CD4-positive, alpha-beta T cell (primary cell): ENCODE measurements at regions of chr20 and their contacts with region 1.

Region 1: GRCh38 chr20:36998652-36999051 is 47.1 kb upstream of the SAMHD1 start:
- DNase-seq: peak in 5 of 14 experiments; percentile 7 to 67 (median 53)
- ATAC-seq: peak; percentile 93
- H3K4me3 ChIP-seq: no peak overlapping the region
- H3K4me3 Mint-ChIP-seq: peak overlapping the region; percentile 14
- H3K27ac ChIP-seq: peak overlapping the region; percentile 43 to 54
- H3K27ac Mint-ChIP-seq: peak overlapping the region; percentile 98
- H3K4me1 ChIP-seq: peaks cover 4% of the 10 kb centered on the region
- H3K4me1 Mint-ChIP-seq: peaks cover 21% of the 10 kb centered on the region
- H3K27me3 ChIP-seq: no peaks in the 10 kb centered on the region
- H3K27me3 Mint-ChIP-seq: no peaks in the 10 kb centered on the region
- CTCF ChIP-seq: no peak

Region 2: DNA sequence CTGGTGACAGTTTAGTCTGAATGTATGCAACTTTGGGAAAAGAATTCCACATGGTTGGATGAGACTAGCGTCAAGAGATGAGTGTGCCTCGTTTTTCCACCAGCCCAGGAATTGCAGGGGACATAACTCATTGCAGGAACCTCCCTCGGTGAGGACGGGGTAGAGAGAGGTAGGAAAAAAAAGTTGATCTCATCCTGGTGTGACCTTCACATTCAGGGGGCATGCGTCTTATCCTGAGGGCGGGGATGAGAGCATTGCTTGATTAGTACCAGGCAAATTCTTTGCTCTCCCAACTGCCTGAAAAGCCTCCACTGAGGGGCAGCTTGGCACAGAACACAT is 110.9 kb before region 1 on chr20:
- CTCF ChIA-PET with region 1: no interaction called
- POLR2A ChIA-PET with region 1: no interaction called
- intact Hi-C with region 1: no loop called
- DNase-seq: no peak
- ATAC-seq: no peak
- H3K4me3 ChIP-seq: no peak overlapping the region
- H3K4me3 Mint-ChIP-seq: no peak overlapping the region
- H3K27ac ChIP-seq: no peak overlapping the region
- H3K27ac Mint-ChIP-seq: peak overlapping the region; percentile 61
- H3K4me1 ChIP-seq: peaks cover 13% of the 10 kb centered on the region
- H3K4me1 Mint-ChIP-seq: peaks cover 16% of the 10 kb centered on the region
- H3K27me3 ChIP-seq: no peaks in the 10 kb centered on the region
- H3K27me3 Mint-ChIP-seq: no peaks in the 10 kb centered on the region
- CTCF ChIP-seq: no peak

Region 3: DNA sequence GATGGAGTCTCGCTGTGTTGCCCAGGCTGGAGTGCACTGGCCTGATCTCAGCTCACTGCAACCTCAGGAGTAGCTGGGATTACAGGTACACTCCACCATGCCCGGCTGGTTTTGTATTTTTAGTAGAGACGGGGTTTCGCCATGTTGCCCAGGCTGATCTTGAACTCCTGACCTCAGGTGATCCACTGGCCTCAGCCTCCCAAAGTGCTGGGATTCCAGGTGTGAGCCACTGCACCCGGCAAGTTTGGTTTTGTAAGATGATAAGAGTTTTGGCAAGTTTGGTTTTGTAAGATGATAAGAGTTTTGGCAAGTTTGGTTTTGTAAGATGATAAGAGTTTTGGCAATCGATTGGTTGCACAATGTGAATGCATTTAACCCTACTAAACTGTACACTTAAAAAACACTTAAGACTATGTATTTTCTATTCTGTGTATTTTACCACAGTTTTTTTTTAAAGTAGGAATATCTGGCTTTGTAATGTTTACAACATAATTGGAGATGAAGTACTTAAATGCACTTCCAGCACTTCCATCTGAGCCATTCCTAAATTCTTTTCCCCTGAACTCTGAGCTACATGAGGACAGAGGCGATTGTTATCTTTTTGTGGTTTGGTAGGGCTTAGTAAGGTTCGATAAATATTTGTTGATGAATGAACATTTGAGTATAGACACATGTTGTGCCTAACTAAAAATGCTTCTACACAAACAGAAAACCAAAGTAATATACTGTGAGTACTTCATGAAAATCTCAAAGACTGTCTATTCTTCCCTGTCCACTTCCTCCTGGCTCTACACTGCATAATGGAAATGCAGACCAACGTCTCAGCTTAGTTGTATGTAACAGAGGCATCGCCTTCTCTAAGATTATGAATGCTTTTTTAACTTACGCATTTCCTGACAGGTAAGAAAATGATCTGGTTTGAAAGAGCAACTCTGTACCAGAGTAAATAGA is 65.9 kb before region 1 on chr20:
- CTCF ChIA-PET with region 1: no interaction called
- POLR2A ChIA-PET with region 1: interaction called, 10 read pairs
- intact Hi-C with region 1: no loop called
- DNase-seq: peak in 1 of 14 experiments; percentile 16
- ATAC-seq: no peak
- H3K4me3 ChIP-seq: no peak overlapping the region
- H3K4me3 Mint-ChIP-seq: peak overlapping the region; percentile 37
- H3K27ac ChIP-seq: peak overlapping the region in 1 of 2 donors; percentile 21
- H3K27ac Mint-ChIP-seq: peak overlapping the region; percentile 81
- H3K4me1 ChIP-seq: peaks cover 68% of the 10 kb centered on the region
- H3K4me1 Mint-ChIP-seq: peaks cover 64% of the 10 kb centered on the region
- H3K27me3 ChIP-seq: no peaks in the 10 kb centered on the region
- H3K27me3 Mint-ChIP-seq: no peaks in the 10 kb centered on the region
- CTCF ChIP-seq: no peak

Region 4: GRCh38 chr20:37032077-37032476 is 33.4 kb after region 1 on chr20:
- CTCF ChIA-PET with region 1: no interaction called
- POLR2A ChIA-PET with region 1: no interaction called
- intact Hi-C with region 1: no loop called
- DNase-seq: no peak
- ATAC-seq: no peak
- H3K4me3 ChIP-seq: no peak overlapping the region
- H3K4me3 Mint-ChIP-seq: no peak overlapping the region
- H3K27ac ChIP-seq: no peak overlapping the region
- H3K27ac Mint-ChIP-seq: no peak overlapping the region
- H3K4me1 ChIP-seq: no peaks in the 10 kb centered on the region
- H3K4me1 Mint-ChIP-seq: no peaks in the 10 kb centered on the region
- H3K27me3 ChIP-seq: no peaks in the 10 kb centered on the region
- H3K27me3 Mint-ChIP-seq: no peaks in the 10 kb centered on the region
- CTCF ChIP-seq: no peak

Region 5: GRCh38 chr20:37178839-37179670 is 180.4 kb after region 1 on chr20 and contains the starts of genes MROH8 and RPN2:
- CTCF ChIA-PET with region 1: no interaction called
- POLR2A ChIA-PET with region 1: no interaction called
- intact Hi-C with region 1: no loop called
- DNase-seq: peak; percentile 87 to 96 (median 93)
- ATAC-seq: peak; percentile 92
- H3K4me3 ChIP-seq: peak within 1 kb of the TSS; percentile 80
- H3K4me3 Mint-ChIP-seq: peak within 1 kb of the TSS; percentile 99
- H3K27ac ChIP-seq: peak within 1 kb of the TSS; percentile 84 to 90
- H3K27ac Mint-ChIP-seq: peak within 1 kb of the TSS; percentile 88
- H3K4me1 ChIP-seq: peaks cover 40% of the 10 kb centered on the region
- H3K4me1 Mint-ChIP-seq: peaks cover 46% of the 10 kb centered on the region
- H3K27me3 ChIP-seq: no peaks in the 10 kb centered on the region
- H3K27me3 Mint-ChIP-seq: no peaks in the 10 kb centered on the region
- CTCF ChIP-seq: no peak
- total RNA-seq, gene MROH8: 1.1 to 1.2 TPM
- total RNA-seq, gene RPN2: 62.8 to 65.8 TPM